HEK293 (cell line): ENCODE measurements at regions of chrX and their contacts with region 1.

Region 1: GRCh38 chrX:24550166-24550565 is 85.1 kb downstream of the PDK3 start:
- H3K4me3 ChIP-seq: no peak overlapping the region
- H3K27ac ChIP-seq: no peak overlapping the region
- H3K4me1 ChIP-seq: no peaks in the 10 kb centered on the region
- CTCF ChIP-seq: no peak

Region 2: GRCh38 chrX:24561121-24561520 is 11.0 kb after region 1 on chrX:
- CTCF ChIA-PET with region 1: interaction called, 11 read pairs
- POLR2A ChIA-PET with region 1: no interaction called
- H3K4me3 ChIP-seq: no peak overlapping the region
- H3K27ac ChIP-seq: no peak overlapping the region
- H3K4me1 ChIP-seq: no peaks in the 10 kb centered on the region
- CTCF ChIP-seq: no peak